Activated T-helper 2 cell treated with anti-CD3 and anti-CD28 coated beads, Interferon-gamma antibody, Interleukin-2, Interleukin-4, amounts not matched to agents 10 μg/mL and 5 μg/mL and 100 μg/mL, durations not matched to agents 14 hours and 24 hours and 36 hours (primary cell): ENCODE measurements at regions of chr7 and their contacts with region 1.

Region 1: DNA sequence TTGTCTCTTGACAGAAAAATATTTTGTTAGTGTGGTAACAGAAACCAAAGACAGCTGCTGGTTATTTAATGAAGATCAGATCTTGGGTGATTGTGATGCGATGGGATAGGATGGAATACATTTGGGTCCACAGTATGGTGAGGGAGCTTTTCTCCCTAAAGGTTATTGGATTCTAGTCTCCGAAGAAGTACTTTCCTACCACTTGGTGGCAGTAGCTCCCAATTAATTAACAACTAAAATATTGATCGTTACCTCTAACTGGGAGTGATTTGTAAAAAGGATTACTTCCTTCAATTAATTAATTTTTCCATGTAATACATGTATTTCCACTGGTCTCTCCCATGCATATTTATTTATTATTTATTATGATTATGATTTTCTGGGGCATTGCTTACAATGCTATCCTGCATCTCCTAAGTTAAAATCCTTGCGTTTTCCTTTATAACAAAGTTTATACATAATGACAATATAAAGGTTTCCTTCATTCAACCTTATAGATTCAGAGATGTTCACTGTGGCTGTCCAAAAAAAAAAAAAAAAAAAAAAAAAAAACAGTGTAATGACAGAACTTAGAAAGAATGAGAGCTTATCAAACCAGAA is 25.6 kb downstream of the TMEM196 start:
- DNase-seq: no peak
- H3K4me3 Mint-ChIP-seq: no peak overlapping the region
- H3K27ac Mint-ChIP-seq: no peak overlapping the region
- H3K4me1 Mint-ChIP-seq: no peaks in the 10 kb centered on the region
- H3K27me3 Mint-ChIP-seq: no peaks in the 10 kb centered on the region

Region 2: DNA sequence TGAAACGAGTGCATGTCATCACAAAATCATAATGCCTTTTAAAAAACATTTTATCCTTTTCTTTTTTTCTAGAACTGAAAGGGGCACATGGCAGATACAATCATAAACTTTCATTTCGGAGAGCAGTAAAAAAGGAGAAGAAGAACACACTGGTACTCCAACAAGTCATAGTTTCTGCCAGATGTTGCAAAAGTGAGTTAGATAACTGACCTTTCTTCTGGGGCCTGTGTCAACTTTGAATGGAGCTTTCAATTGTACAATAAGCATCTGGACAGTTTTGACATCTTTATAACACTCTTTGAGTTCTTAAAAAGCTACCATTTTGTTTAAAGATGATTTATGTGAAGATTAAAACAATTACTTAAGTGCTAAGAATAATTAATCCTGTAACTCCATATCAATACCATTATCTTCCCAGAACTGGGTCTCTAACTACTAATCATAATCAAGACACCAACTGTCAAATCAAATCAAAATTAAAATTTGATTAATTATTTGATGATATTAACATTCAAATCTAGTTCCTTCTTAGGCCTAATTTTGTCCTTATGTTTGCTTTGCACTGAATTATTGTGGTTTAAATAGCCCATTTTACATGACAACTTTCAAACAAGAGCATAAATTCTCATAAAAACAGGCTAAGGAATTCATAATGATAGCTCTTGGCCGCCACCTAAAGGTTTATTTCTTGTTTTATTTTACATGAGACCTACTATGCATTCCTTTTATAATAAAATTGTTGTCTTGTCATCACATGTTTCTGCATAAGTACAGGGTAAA is 563.3 kb after region 1 on chr7:
- intact Hi-C with region 1: loop called (anchors 10 kb)
- DNase-seq: no peak
- H3K4me3 Mint-ChIP-seq: no peak overlapping the region
- H3K27ac Mint-ChIP-seq: no peak overlapping the region
- H3K4me1 Mint-ChIP-seq: no peaks in the 10 kb centered on the region
- H3K27me3 Mint-ChIP-seq: peaks cover 10% of the 10 kb centered on the region